ENCODE measurements at regions of chr21 and their contacts with region 1.

Region 1: GRCh38 chr21:26170471-26171257 is at the start of gene APP:
- DNase-seq: peak; percentile 73
- H3K4me3 ChIP-seq: peak within 1 kb of the TSS; percentile 68 to 94 (median 91)
- H3K27ac ChIP-seq: peak within 1 kb of the TSS; percentile 80
- H3K4me1 ChIP-seq: peaks cover 35% of the 10 kb centered on the region
- H3K27me3 ChIP-seq: no peaks in the 10 kb centered on the region
- CTCF ChIP-seq: peak; percentile 81 to 93
- POLR2A ChIP-seq: peak; percentile 82
- total RNA-seq, gene APP: 811 and 928 TPM in 2 replicates

Region 2: DNA sequence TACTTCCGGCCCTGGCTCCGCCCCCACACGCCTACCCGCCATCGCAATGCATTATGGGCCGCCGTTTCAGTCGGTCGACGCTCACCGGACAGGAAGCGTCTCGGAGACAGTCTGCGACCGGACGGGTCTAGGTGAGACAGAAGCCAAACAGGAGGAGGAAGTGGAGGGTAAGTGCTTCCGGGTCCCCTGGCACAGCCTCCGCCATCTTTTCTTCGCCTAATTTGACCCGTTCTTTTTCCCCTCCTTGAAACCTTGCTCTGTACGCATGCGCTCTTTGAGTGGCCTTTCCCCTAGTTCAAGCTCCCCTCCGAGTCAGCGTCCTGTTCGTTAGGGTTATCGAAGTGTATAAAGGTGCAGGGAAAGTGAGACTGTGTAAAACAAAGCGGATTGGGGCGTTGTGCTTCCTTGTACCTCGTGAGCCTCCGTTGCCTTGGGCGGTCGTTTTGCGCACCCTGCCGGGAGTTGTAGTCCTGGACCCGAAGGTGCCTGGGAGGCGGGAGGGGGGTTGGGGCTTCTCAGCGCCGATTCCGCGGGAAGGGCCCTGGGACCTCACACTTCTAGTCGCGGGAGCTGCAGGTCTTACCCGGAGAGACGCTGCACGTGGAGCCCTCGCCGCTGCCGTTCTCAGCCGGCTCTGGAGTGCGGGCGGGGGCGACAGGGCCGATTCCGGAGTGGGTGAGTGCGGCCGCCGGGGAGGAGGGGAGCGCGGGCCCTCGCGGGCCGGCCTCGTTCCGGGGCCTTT is 435.6 kb before region 1 on chr21 and contains the starts of genes ATP5PF and GABPA:
- CTCF ChIA-PET with region 1: no interaction called
- POLR2A ChIA-PET with region 1: no interaction called
- dilution Hi-C with region 1: no loop called
- intact Hi-C with region 1: loop called (anchors 1 kb)
- DNase-seq: peak; percentile 98
- H3K4me3 ChIP-seq: peak within 1 kb of the TSS; percentile 93 to 99 (median 98)
- H3K27ac ChIP-seq: peak within 1 kb of the TSS; percentile 99
- H3K4me1 ChIP-seq: peaks cover 17% of the 10 kb centered on the region
- H3K27me3 ChIP-seq: no peaks in the 10 kb centered on the region
- CTCF ChIP-seq: no peak
- POLR2A ChIP-seq: peak; percentile 85
- total RNA-seq, gene ATP5PF: 132 and 141 TPM in 2 replicates
- total RNA-seq, gene GABPA: 21.0 and 24.1 TPM in 2 replicates

Region 3: GRCh38 chr21:25967573-25968438 is 202.9 kb before region 1 on chr21:
- CTCF ChIA-PET with region 1: interaction called, 9 read pairs
- POLR2A ChIA-PET with region 1: no interaction called
- dilution Hi-C with region 1: no loop called
- intact Hi-C with region 1: loop called (anchors 1 kb)
- DNase-seq: peak; percentile 88
- H3K4me3 ChIP-seq: no peak overlapping the region
- H3K27ac ChIP-seq: peak overlapping the region; percentile 67
- H3K4me1 ChIP-seq: peaks cover 45% of the 10 kb centered on the region
- H3K27me3 ChIP-seq: no peaks in the 10 kb centered on the region
- CTCF ChIP-seq: no peak
- POLR2A ChIP-seq: no peak

Region 4: DNA sequence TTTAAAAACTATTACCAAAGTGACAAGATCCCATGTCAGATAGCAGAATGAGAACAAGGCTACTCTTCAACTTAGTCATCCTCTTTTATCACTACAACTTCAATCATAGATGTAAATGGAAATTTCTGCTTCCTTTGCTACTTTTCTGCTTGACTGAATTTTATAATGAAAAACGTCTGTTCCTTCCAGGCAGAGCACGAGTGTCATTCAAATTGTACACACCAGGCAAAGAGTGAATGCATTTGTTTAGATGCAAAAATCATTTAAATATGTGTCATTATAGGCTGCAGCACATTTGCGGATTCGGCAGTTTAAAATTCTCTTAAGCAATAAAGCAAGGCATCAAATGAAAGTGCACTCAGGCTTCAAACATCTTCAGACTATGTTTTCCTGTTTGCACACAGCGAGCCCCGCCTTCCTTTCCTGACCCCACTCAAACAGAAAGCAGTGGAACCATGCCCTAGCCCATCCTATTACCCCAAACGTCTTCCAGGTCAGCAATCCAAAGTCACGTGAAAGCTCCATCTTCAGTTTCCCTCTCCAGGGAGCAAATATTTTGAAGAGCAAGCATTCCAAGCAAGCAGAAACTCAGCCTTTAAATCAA is 99.7 kb before region 1 on chr21:
- CTCF ChIA-PET with region 1: interaction called, 4 read pairs
- POLR2A ChIA-PET with region 1: no interaction called
- dilution Hi-C with region 1: no loop called
- intact Hi-C with region 1: loop called (anchors 5 kb)
- DNase-seq: peak; percentile 68
- H3K4me3 ChIP-seq: no peak overlapping the region
- H3K27ac ChIP-seq: no peak overlapping the region
- H3K4me1 ChIP-seq: peaks cover 47% of the 10 kb centered on the region
- H3K27me3 ChIP-seq: no peaks in the 10 kb centered on the region
- CTCF ChIP-seq: no peak
- POLR2A ChIP-seq: no peak

Region 5: GRCh38 chr21:26140185-26140584 is 30.5 kb before region 1 on chr21:
- CTCF ChIA-PET with region 1: interaction called, 11 read pairs
- POLR2A ChIA-PET with region 1: no interaction called
- dilution Hi-C with region 1: no loop called
- intact Hi-C with region 1: loop called (anchors 1 kb)
- DNase-seq: peak; percentile 98
- H3K4me3 ChIP-seq: no peak overlapping the region
- H3K27ac ChIP-seq: peak overlapping the region; percentile 83
- H3K4me1 ChIP-seq: peaks cover 39% of the 10 kb centered on the region
- H3K27me3 ChIP-seq: no peaks in the 10 kb centered on the region
- CTCF ChIP-seq: no peak
- POLR2A ChIP-seq: peak; percentile 53

Region 6: DNA sequence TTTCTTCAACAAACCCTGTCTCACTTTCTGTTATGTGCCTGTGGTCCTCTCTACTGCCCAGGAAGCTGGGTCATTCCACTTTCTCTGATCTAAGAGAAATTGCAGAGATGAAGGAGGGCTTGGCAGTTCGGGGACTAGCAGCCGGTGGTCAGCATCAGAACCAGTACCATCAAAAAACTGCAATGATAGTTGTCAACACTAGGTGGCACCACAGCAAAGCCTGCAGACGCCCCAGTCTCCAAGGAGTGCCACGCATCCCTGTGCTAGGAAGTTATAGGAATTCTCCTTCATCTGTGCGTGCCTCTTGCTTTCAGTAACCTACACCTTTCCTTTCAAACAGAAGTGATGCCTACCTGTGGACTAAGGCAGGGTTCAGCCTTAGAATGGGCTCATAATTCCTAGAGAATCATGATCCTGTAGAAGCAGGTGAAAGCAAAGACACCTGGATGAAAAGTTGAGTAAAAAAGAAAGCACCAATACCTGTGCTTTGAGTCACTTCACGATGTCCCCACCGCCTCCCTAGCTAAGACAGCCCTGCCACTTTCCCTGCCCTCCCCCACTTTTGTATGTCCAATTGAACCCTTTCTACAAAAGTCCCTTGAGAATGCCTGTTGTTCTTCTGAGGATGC is 545.3 kb after region 1 on chr21:
- CTCF ChIA-PET with region 1: interaction called, 16 read pairs
- POLR2A ChIA-PET with region 1: no interaction called
- dilution Hi-C with region 1: no loop called
- intact Hi-C with region 1: loop called (anchors 2 kb)
- DNase-seq: peak; percentile 55
- H3K4me3 ChIP-seq: no peak overlapping the region
- H3K27ac ChIP-seq: no peak overlapping the region
- H3K4me1 ChIP-seq: no peaks in the 10 kb centered on the region
- H3K27me3 ChIP-seq: no peaks in the 10 kb centered on the region
- CTCF ChIP-seq: peak; percentile 81 to 89
- POLR2A ChIP-seq: no peak

Region 7: DNA sequence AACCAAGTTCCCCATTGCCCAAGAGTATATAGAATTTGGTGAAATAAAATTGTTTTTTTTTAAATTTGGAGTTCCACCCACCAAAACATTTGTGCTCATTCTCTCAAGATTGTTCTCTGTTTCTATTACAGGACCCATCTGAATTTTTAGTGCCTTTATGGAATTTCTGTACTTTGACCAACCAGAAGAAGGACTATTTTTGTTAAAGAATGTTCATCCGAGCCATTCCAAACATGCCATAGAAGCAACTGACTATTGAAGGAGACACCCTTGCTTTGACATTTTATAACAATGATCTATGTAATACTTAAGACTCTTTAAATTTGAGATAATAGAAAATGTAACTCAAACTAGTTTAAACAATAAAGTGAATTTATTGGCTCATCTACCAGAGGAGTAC is 1452.0 kb after region 1 on chr21:
- CTCF ChIA-PET with region 1: no interaction called
- POLR2A ChIA-PET with region 1: no interaction called
- dilution Hi-C with region 1: no loop called
- intact Hi-C with region 1: no loop called
- DNase-seq: no peak
- H3K4me3 ChIP-seq: no peak overlapping the region
- H3K27ac ChIP-seq: no peak overlapping the region
- H3K4me1 ChIP-seq: no peaks in the 10 kb centered on the region
- H3K27me3 ChIP-seq: no peaks in the 10 kb centered on the region
- CTCF ChIP-seq: no peak
- POLR2A ChIP-seq: no peak

Measured in endothelial cell of umbilical vein (primary cell).